HepG2 (cell line): ENCODE measurements at regions of chr16 and their contacts with region 1.

Region 1: DNA sequence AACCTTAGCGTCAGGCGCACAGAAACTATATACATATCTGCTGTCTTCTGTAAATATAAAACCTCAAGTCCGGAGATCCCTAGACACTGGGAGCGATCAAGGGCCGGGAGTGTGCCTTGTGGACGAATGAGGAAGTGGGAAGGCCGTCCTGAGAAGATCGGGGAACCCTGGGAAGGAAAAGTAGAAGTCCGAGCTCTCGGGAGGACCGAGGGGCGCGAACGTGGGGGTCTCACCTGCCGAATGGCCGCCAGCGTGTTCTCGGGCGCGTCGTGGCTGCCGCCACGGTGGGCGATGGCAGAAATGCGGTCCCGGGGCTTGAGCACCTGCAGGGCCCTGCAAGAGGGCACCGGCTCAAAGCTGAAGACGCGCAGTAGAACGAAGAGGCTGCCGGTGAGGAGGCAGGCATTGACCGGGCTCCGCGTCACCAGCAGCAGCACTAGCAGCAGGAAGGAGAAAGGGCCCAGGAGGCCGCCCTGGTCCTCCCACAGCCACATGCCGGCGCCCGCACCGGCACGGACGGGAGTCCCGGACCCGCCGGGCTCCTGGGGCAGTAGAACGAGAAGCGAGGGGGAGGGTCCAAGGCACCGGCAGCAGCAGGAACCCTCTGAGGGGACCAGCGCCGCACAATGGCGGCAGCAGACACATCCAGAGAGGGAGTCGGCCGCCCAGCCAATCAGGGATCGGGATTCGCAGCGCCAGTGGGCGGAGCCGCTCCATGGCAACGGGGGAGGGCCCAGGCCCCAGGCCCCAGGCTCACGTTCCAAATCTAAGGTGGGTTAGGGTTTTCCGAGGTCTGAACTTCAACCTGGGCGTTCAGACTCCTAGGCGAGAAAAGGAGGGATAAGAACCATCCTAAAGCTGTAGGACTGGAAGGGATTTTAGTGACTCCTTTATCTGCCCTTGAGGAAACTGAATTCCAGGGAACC is at the start of gene GDE1:
- DNase-seq: peak; percentile 93
- ATAC-seq: peak; percentile 86
- H3K4me3 ChIP-seq: peak within 1 kb of the TSS; percentile 94 to 100 (median 95)
- H3K27ac ChIP-seq: peak within 1 kb of the TSS; percentile 64
- H3K4me1 ChIP-seq: peaks cover 64% of the 10 kb centered on the region
- H3K27me3 ChIP-seq: no peaks in the 10 kb centered on the region; a peak in 1 of 5 replicates
- CTCF ChIP-seq: peak; percentile 85
- EP300 ChIP-seq: no peak
- POLR2A ChIP-seq: peak; percentile 71 to 95
- RAD21 ChIP-seq: no peak
- total RNA-seq, gene GDE1: 55.1 and 59.0 TPM in 2 replicates

Region 2: DNA sequence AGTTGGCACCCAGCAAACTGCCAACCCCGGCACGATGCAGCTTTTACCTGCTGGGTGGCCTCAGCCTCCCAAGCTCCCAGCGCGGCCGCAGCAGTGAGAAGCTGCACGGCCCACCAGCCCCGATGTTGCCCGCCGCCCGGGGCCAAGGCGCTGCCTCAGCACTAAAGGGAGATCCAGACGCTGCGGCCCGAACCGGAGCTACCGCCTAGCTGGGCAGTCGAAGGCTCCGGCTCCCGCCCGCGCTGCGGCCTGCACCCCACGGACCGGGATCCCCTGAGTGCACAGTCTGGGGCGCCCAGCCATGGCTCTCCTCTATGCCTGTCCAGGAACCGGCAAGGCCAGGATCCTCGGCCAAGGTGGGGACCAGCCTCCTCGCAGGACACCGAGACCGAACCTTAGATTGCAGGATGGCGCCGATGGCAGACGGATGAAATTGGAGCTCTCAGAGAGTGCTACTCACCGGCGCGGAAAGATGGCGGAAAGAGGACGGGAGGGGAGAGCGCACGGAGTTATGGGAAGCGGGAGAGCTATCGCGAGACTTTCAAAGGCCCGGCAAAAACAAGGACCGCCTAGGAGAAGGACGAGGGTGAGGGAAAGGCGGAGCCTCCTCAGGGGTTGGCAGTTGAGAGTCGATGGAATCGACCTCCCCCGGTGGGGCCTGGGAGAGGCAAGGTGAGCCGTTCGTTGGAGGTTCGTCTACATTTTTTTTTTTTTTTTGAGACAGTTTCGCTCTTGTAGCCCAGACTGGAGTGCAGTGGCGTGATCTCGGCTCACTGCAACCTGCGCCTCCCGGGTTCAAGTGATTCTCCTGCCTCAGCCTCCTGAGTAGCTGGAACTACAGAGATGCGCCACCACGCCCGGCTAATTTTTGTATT is 731.6 kb before region 1 on chr16 and contains the start of gene RPS15A:
- CTCF ChIA-PET with region 1: no interaction called
- POLR2A ChIA-PET with region 1: interaction called, 5 read pairs
- in situ Hi-C with region 1: no loop called
- intact Hi-C with region 1: loop called (anchors 10 kb)
- DNase-seq: peak; percentile 100
- ATAC-seq: peak; percentile 96
- H3K4me3 ChIP-seq: peak within 1 kb of the TSS; percentile 74 to 98 (median 96)
- H3K27ac ChIP-seq: peak within 1 kb of the TSS; percentile 78
- H3K4me1 ChIP-seq: peaks cover 62% of the 10 kb centered on the region
- H3K27me3 ChIP-seq: peaks cover 0 to 7% of the 10 kb centered on the region in 2 experiments; a peak in 1 of 5 replicates
- CTCF ChIP-seq: peak; percentile 3; the same call in 1 of the 2 replicates
- EP300 ChIP-seq: peak in 1 of 2 experiments; percentile 38; a peak in 2 of 4 replicates
- POLR2A ChIP-seq: peak; percentile 96 to 99
- RAD21 ChIP-seq: peak; percentile 43; the same call in 1 of the 2 replicates
- total RNA-seq, gene RPS15A: 5,489 and 6,421 TPM in 2 replicates

Region 3: DNA sequence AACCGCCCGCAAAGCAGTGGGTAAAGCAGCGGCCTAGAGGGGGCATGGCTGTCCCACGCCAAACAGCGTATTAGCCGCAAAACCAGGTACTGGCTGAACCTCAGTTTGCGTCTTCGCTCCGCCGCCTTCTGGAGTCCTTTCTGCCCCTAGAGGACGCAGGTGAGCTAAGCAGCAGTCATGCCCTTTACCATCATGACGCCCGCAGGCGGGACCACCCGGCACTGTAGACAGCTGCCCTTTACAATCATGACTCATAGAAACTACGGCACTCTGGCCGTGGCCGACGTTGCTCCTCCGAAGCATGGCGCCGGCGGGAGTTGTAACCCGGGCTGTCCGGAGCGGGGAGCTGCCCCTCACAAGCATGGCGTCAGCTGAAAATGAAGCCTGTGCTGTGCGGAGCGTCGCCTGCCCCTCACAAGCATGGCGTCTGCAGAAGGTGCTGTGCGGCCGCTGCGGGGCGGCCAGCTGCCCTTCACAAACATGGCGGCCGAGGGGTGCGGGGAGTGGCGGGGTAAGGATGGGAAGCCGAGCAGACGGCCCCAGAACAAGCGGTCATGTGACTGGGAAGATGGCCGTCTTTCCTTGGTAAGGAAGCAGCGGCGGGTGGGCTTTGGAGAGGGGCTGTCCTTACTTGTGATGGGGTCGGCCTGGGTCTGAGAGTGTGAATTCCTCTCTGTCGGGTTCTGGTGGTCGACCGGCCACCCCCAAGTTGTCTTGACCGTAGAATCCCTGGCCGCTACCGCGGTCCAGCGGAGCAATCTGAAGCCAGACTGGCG is 33.6 kb after region 1 on chr16 and contains the start of gene VPS35L:
- CTCF ChIA-PET with region 1: no interaction called
- POLR2A ChIA-PET with region 1: interaction called, 34 read pairs
- in situ Hi-C with region 1: no loop called
- intact Hi-C with region 1: loop called (anchors 2 kb)
- DNase-seq: peak; percentile 92
- ATAC-seq: peak; percentile 99
- H3K4me3 ChIP-seq: peak within 1 kb of the TSS; percentile 38 to 69 (median 57)
- H3K27ac ChIP-seq: peak within 1 kb of the TSS; percentile 48
- H3K4me1 ChIP-seq: peaks cover 19% of the 10 kb centered on the region
- H3K27me3 ChIP-seq: no peaks in the 10 kb centered on the region
- CTCF ChIP-seq: peak; percentile 90
- EP300 ChIP-seq: no peak
- POLR2A ChIP-seq: peak; percentile 48 to 79; a peak in 3 of 4 replicates
- RAD21 ChIP-seq: peak; percentile 48; the same call in 1 of the 2 replicates
- total RNA-seq, gene VPS35L: 0.97 and 1.4 TPM in 2 replicates